ENCODE measurements at regions of chr4 and their contacts with region 1.

Region 1: GRCh38 chr4:8176547-8177399 is 18.2 kb upstream of the ABLIM2 start:
- DNase-seq: peak in 4 of 5 donors; percentile 42 to 56 (median 52)
- H3K4me3 ChIP-seq: no peak overlapping the region
- H3K4me3 Mint-ChIP-seq: no peak overlapping the region
- H3K27ac ChIP-seq: no peak overlapping the region
- H3K27ac Mint-ChIP-seq: no peak overlapping the region
- H3K4me1 ChIP-seq: no peaks in the 10 kb centered on the region
- H3K4me1 Mint-ChIP-seq: peaks cover 0 to 5% (median 1%) of the 10 kb centered on the region in 4 donors
- H3K27me3 ChIP-seq: no peaks in the 10 kb centered on the region
- H3K27me3 Mint-ChIP-seq: peaks cover 0 to 3% of the 10 kb centered on the region in 2 donors

Region 2: DNA sequence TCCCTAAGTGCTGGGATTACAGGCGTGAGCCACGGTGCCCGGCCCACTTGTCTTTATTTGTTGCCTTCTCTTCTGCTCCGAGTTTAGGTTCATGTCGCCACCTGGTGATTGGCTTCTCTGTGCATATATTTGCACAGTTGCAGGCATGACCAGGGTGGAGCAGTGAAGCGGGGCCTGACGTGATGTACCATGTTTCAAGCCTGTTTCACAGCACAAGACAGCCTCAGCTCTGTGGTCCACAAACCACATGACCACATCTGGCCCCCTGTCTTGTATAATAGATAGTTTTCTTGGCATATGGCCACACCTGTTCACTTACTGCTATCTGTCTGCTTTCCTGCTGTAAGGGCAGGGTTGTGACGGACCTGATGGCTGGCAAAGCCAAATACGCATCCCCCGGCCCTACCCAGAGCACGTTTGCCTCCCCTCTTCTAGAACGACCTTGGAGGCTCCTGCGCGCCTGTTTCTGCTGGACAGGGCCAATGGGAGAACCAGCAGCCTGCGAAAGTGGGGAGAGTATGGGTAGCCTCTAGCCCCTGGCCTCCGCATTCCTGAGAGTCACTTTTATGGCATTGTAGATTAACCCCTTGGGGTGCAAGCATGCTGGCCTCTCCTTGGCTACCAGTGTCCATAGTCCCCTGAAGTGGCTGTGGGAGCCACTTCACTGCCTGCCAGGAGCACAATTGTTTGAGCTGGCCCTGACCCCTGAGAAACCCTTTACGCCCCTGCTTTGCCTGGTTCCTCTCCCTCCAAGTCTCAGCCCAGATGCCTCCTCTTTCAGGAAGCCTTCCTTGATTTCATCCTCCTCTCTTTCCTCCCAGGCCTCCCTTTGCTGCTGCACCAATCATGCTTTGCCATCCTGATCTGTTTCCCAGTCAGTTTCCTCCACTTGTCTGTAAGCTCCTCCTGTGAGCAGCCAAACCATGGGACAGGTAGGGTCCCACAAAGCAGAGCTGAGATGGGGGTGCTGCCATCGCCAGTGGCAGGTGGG is 16.3 kb after region 1 on chr4:
- CTCF ChIA-PET with region 1: interaction called, 26 read pairs
- POLR2A ChIA-PET with region 1: no interaction called
- intact Hi-C with region 1: no loop called
- DNase-seq: peak in 2 of 5 donors; percentile 18 to 21
- H3K4me3 ChIP-seq: no peak overlapping the region
- H3K4me3 Mint-ChIP-seq: no peak overlapping the region
- H3K27ac ChIP-seq: no peak overlapping the region
- H3K27ac Mint-ChIP-seq: peak overlapping the region in 2 of 7 donors; percentile 41 to 60
- H3K4me1 ChIP-seq: peaks cover 2% of the 10 kb centered on the region
- H3K4me1 Mint-ChIP-seq: peaks cover under 1 to 16% (median 3%) of the 10 kb centered on the region in 4 donors
- H3K27me3 ChIP-seq: no peaks in the 10 kb centered on the region
- H3K27me3 Mint-ChIP-seq: no peaks in the 10 kb centered on the region

Region 3: GRCh38 chr4:8198906-8199593 is 22.3 kb after region 1 on chr4 and contains the start of gene SH3TC1:
- CTCF ChIA-PET with region 1: interaction called, 26 read pairs
- POLR2A ChIA-PET with region 1: interaction called, 5 read pairs
- intact Hi-C with region 1: loop called (anchors 2 kb)
- DNase-seq: peak; percentile 45 to 69 (median 62)
- H3K4me3 ChIP-seq: peak within 1 kb of the TSS; percentile 55 to 85
- H3K4me3 Mint-ChIP-seq: peak within 1 kb of the TSS; percentile 94 to 97 (median 96)
- H3K27ac ChIP-seq: peak within 1 kb of the TSS; percentile 84
- H3K27ac Mint-ChIP-seq: peak within 1 kb of the TSS; percentile 96 to 99 (median 98)
- H3K4me1 ChIP-seq: peaks cover 54% of the 10 kb centered on the region
- H3K4me1 Mint-ChIP-seq: peaks cover 22 to 57% (median 42%) of the 10 kb centered on the region in 4 donors
- H3K27me3 ChIP-seq: no peaks in the 10 kb centered on the region
- H3K27me3 Mint-ChIP-seq: no peaks in the 10 kb centered on the region
- total RNA-seq, gene SH3TC1: 37.1 to 41.3 TPM

Region 4: DNA sequence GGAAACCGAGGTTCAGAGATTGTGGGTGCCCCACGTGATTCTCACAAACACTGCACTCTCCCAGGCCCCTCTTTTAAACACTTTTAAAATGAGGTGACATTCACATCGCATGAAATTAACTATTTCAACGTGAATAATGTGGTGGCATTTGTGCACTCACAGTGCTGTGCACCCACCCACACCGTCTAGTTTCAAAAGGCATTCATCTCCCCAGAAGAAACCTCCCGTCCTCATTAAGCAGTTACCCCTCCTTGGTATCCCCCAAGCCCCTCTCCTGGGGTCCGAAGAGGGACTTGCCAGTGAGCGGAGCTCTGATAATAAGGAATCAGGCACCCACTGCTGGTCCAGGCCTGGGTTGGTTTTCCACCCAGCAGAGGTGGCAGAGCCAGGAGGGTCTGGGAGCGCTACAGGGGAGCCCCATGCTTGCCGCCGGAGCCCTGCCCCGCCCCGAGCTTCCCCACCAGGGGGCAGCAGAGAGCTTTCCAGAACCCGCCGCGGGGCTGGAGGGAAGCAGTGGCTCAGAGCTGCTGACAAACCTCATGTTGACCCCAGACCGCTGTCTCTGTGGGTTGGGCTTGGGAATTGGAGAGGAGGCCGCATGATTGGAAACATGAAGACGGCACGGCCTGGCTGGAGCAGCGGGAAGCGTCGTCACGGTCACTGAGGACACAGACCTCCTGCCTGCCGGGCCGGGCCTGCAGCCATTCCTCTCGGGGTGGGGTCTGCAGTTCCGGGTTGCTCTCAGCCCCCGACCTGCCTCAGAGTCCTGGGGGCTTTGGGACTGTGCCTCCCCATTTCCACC is 65.3 kb after region 1 on chr4:
- CTCF ChIA-PET with region 1: interaction called, 10 read pairs
- POLR2A ChIA-PET with region 1: no interaction called
- intact Hi-C with region 1: loop called (anchors 2 kb)
- DNase-seq: peak; percentile 66 to 82 (median 69)
- H3K4me3 ChIP-seq: no peak overlapping the region
- H3K4me3 Mint-ChIP-seq: peak overlapping the region in 1 of 8 donors; percentile 13
- H3K27ac ChIP-seq: no peak overlapping the region
- H3K27ac Mint-ChIP-seq: peak overlapping the region in 6 of 7 donors; percentile 46 to 88 (median 81)
- H3K4me1 ChIP-seq: peaks cover 14% of the 10 kb centered on the region
- H3K4me1 Mint-ChIP-seq: peaks cover 5 to 10% (median 6%) of the 10 kb centered on the region in 4 donors
- H3K27me3 ChIP-seq: no peaks in the 10 kb centered on the region
- H3K27me3 Mint-ChIP-seq: no peaks in the 10 kb centered on the region

Region 5: DNA sequence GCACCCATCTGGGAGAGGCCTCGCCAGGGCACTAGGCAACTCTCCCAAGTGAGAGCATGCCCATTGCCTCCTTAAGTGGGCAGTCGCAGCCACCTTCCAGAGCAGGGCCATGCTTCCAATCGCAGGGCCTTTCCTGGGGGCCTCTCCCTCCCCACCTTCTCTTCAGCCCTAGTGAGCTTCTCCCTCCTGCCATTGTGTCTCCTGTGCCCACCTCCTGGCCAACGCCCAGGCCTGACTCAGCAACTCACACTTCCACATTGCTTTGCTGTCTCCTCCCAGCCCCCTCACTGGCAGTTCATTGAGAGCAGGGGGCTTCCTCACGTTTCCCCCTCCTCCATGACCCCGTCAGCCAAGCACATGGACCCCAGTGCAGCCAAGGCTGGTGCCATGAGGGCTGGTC is 118.6 kb after region 1 on chr4:
- CTCF ChIA-PET with region 1: no interaction called
- POLR2A ChIA-PET with region 1: no interaction called
- intact Hi-C with region 1: no loop called
- DNase-seq: no peak
- H3K4me3 ChIP-seq: no peak overlapping the region
- H3K4me3 Mint-ChIP-seq: no peak overlapping the region
- H3K27ac ChIP-seq: no peak overlapping the region
- H3K27ac Mint-ChIP-seq: no peak overlapping the region
- H3K4me1 ChIP-seq: no peaks in the 10 kb centered on the region
- H3K4me1 Mint-ChIP-seq: no peaks in the 10 kb centered on the region
- H3K27me3 ChIP-seq: peaks cover 4% of the 10 kb centered on the region
- H3K27me3 Mint-ChIP-seq: peaks cover 1 to 3% of the 10 kb centered on the region in 2 donors

Region 6: GRCh38 chr4:8403173-8403753 is 226.5 kb after region 1 on chr4:
- CTCF ChIA-PET with region 1: interaction called, 39 read pairs
- POLR2A ChIA-PET with region 1: interaction called, 3 read pairs
- intact Hi-C with region 1: no loop called
- DNase-seq: peak in 4 of 5 donors; percentile 24 to 42 (median 27)
- H3K4me3 ChIP-seq: no peak overlapping the region
- H3K4me3 Mint-ChIP-seq: no peak overlapping the region
- H3K27ac ChIP-seq: no peak overlapping the region
- H3K27ac Mint-ChIP-seq: peak overlapping the region in 1 of 7 donors; percentile 15
- H3K4me1 ChIP-seq: no peaks in the 10 kb centered on the region
- H3K4me1 Mint-ChIP-seq: no peaks in the 10 kb centered on the region
- H3K27me3 ChIP-seq: no peaks in the 10 kb centered on the region
- H3K27me3 Mint-ChIP-seq: no peaks in the 10 kb centered on the region